Activated CD4-positive, alpha-beta T cell treated with anti-CD3 and anti-CD28 coated beads, Interleukin-2, amount 10 ng/mL, durations not matched to agents 24 days and 14 days (primary cell): ENCODE measurements at regions of chr1 and their contacts with region 1.

Region 1: GRCh38 chr1:154220071-154220969 is at the start of gene UBAP2L:
- DNase-seq: peak; percentile 100
- H3K4me3 Mint-ChIP-seq: peak within 1 kb of the TSS; percentile 96
- H3K27ac Mint-ChIP-seq: peak within 1 kb of the TSS; percentile 95
- H3K4me1 Mint-ChIP-seq: peaks cover 55% of the 10 kb centered on the region
- H3K27me3 Mint-ChIP-seq: peaks cover 3% of the 10 kb centered on the region
- total RNA-seq, gene UBAP2L: 277 and 281 TPM in 2 replicates

Region 2: DNA sequence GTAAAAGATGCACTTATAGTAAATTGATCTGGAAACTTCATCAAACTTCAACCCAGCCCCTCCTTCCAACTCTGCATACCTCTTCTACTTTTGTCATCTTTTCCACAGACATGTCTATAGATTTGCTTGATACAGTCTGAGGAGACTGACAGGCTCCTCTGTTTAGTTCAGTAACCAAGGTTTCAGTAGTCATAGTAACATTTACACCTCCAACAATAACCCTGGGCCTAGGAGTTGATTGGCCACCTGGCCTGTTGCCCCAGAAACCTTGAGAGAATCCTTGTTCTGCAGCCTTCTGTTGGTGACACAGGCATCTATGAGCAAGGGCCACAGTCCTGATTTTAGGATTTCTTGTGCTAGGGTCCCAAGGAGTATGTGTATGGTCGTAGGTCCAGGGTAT is 14.1 kb before region 1 on chr1 and contains the start of gene CFAP141:
- intact Hi-C with region 1: loop called (anchors 1 kb)
- DNase-seq: no peak
- H3K4me3 Mint-ChIP-seq: no peak within 1 kb of the TSS
- H3K27ac Mint-ChIP-seq: peak within 1 kb of the TSS; percentile 86
- H3K4me1 Mint-ChIP-seq: peaks cover 26% of the 10 kb centered on the region
- H3K27me3 Mint-ChIP-seq: no peaks in the 10 kb centered on the region
- total RNA-seq, gene CFAP141: not detected in 2 replicates